ENCODE measurements at regions of chr20 and their contacts with region 1.

Region 1: GRCh38 chr20:54668271-54669039 is 193.1 kb downstream of the DOK5 start:
- DNase-seq: peak in 1 of 2 experiments; percentile 77
- H3K4me3 ChIP-seq: no peak overlapping the region
- H3K27ac ChIP-seq: no peak overlapping the region
- H3K4me1 ChIP-seq: no peaks in the 10 kb centered on the region; a peak in 2 of 7 replicates
- H3K27me3 ChIP-seq: peaks cover 0 to 3% (median 0%) of the 10 kb centered on the region in 4 experiments; a peak in 1 of 7 replicates
- CTCF ChIP-seq: peak; percentile 62 to 68 (median 63)
- EP300 ChIP-seq: no peak
- POLR2A ChIP-seq: no peak
- RAD21 ChIP-seq: peak; percentile 65 to 71

Region 2: DNA sequence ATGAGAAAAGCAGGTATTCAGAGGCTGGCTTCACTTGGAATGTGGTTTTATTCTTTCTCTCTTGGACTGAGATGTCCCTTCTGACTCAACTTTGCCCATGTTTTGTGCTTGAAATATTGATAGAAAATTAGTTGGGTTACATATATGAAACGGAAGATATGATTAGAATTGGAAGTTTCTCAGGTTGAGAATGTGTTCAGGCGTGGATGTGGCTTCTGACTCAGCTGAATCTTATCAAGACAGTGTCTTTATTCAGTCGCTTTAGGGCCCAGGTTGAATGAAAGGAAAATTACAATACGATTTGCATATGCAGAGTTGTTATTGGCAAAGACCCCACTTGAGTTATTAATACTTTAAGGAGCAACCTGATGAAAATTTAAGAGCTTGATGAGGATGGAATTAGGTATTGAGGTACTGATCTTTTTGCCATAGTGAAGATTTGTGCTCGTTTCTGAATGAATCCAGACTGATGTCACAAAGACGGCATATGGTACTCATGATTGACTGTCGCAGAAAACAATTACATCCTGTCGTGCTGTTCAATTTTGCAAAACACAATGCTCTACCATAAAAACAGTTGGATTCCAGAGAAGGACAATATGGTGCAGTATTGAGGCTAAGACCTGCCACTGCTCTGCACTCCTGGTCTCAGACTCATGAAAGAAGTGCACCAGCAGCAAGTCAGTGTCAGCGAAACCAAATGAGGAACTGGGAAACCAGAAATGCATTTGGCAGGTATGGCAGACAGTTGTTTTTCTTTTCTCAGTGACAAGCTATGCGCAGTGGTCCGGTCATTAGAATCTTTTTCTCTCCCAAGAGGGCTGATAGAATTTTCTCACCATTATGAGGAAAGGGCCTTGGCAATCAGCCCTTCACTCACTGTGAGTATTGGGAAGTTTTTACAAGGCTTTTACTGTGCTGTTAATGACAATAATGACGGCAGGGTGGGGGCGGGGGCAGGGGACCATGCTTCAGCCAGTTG is 34.8 kb before region 1 on chr20:
- CTCF ChIA-PET with region 1: no interaction called
- POLR2A ChIA-PET with region 1: no interaction called
- DNase-seq: no peak
- H3K4me3 ChIP-seq: no peak overlapping the region
- H3K27ac ChIP-seq: no peak overlapping the region
- H3K4me1 ChIP-seq: peaks cover 0 to 7% (median 2%) of the 10 kb centered on the region in 4 experiments; a peak in 5 of 7 replicates
- H3K27me3 ChIP-seq: no peaks in the 10 kb centered on the region
- CTCF ChIP-seq: no peak
- EP300 ChIP-seq: no peak
- POLR2A ChIP-seq: no peak
- RAD21 ChIP-seq: no peak

Region 3: DNA sequence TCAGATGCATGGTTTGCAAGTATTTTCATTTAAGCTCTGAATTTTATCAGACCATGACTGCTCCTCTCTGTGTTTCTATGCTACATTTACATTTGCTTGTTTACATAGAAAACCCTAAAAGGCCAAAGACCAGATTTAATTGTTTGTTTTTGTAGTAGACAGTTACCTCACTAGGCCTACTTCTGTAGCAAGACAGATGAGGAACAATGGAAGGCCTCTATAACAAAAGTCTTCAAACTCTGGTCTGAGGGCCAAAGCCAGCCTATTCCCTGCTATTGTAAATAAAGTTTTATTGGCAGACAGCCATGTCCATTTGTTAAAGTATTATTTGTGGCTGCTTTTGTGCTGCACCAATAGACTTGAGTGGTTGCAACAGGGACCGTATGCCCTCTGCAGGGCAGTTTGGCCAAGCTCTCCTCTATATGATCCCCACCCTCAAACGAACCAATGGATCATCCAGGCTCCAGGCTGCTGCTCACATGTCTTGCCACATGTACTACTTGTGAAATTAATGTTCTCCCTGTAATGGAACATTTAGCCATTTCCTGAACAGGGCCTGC is 11.1 kb before region 1 on chr20:
- CTCF ChIA-PET with region 1: interaction called, 11 read pairs
- POLR2A ChIA-PET with region 1: no interaction called
- DNase-seq: no peak
- H3K4me3 ChIP-seq: no peak overlapping the region
- H3K27ac ChIP-seq: no peak overlapping the region
- H3K4me1 ChIP-seq: peaks cover 0 to 3% (median 1%) of the 10 kb centered on the region in 4 experiments; a peak in 2 of 7 replicates
- H3K27me3 ChIP-seq: peaks cover 0 to 4% (median 0%) of the 10 kb centered on the region in 4 experiments; a peak in 3 of 7 replicates
- CTCF ChIP-seq: peak in 2 of 3 experiments; percentile 4 to 24; a peak in 2 of 4 replicates
- EP300 ChIP-seq: no peak
- POLR2A ChIP-seq: no peak
- RAD21 ChIP-seq: peak; percentile 38 to 44

Region 4: GRCh38 chr20:54680872-54681619 is 12.6 kb after region 1 on chr20:
- CTCF ChIA-PET with region 1: interaction called, 25 read pairs
- POLR2A ChIA-PET with region 1: no interaction called
- DNase-seq: peak in 1 of 2 experiments; percentile 70
- H3K4me3 ChIP-seq: no peak overlapping the region
- H3K27ac ChIP-seq: no peak overlapping the region
- H3K4me1 ChIP-seq: no peaks in the 10 kb centered on the region; a peak in 1 of 7 replicates
- H3K27me3 ChIP-seq: 0 out of 7 replicates have a peak, but pooled peaks cover 0 to 2% (median 0%) of the 10 kb centered on the region in 4 experiments
- CTCF ChIP-seq: peak in 2 of 3 experiments; percentile 55 to 56; a peak in 3 of 4 replicates
- EP300 ChIP-seq: no peak
- POLR2A ChIP-seq: no peak
- RAD21 ChIP-seq: peak; percentile 76 to 84

Measured in H1 (cell line).